Activated naive CD4-positive, alpha-beta T cell treated with anti-CD3 and anti-CD28 coated beads for 36 hours (primary cell): ENCODE measurements at regions of chr20 and their contacts with region 1.

Region 1: GRCh38 chr20:5608442-5609161 is 141.6 kb upstream of the SHLD1 start:
- DNase-seq: no peak
- H3K4me3 Mint-ChIP-seq: peak overlapping the region; percentile 92
- H3K27ac Mint-ChIP-seq: peak overlapping the region; percentile 99
- H3K4me1 Mint-ChIP-seq: peaks cover 57% of the 10 kb centered on the region
- H3K27me3 Mint-ChIP-seq: no peaks in the 10 kb centered on the region

Region 2: DNA sequence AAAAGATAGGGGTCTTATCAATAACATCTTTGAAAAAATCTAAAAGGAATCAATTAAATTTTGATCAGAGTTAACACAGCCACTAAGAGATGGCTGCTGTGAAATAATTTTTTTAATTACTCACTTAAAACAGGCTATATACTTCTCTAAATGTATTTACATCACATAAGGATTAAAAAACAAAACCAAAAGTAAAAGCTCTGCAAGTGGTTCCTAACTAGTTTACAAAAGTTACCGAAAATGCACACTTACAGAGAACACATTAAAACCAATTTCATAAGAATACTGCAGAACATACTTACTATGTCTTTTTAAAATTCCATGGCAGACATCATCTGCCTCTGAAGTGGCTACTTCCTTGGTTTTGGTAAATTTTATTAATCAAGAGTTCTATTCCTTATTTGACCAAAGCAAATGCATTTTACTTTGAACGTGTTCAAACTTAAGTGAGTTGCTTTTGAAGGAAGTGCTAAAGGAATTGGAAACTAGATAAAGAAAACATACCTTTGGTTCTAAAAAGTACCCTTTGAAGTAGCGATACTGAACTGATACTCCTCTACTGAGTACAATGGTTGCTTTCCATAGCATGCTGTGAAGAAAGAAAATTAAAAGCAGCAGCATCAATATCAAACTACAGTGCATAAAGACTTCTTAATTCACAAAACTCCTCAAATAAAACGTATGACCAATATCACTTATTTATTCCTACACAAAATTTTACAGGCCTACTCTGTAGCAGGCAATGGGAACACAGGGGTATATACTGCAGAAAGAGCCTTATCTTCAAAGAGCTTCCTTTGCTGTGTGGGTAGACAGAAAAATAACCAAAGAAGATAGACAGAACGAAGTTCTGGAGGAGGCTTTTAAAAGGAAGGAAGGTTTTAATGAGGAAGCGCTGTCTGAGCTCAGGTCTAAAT is 15.5 kb before region 1 on chr20:
- CTCF ChIA-PET with region 1: interaction called, 11 read pairs
- intact Hi-C with region 1: loop called (anchors 1 kb)
- DNase-seq: no peak
- H3K4me3 Mint-ChIP-seq: peak overlapping the region; percentile 69
- H3K27ac Mint-ChIP-seq: peak overlapping the region; percentile 95
- H3K4me1 Mint-ChIP-seq: peaks cover 78% of the 10 kb centered on the region
- H3K27me3 Mint-ChIP-seq: no peaks in the 10 kb centered on the region